ENCODE measurements at regions of chr2 and their contacts with region 1.

Region 1: GRCh38 chr2:207408086-207408794 is 121.5 kb upstream of the CREB1 start:
- DNase-seq: no peak
- ATAC-seq: no peak
- H3K4me3 ChIP-seq: no peak overlapping the region
- H3K4me3 Mint-ChIP-seq: no peak overlapping the region
- H3K27ac ChIP-seq: no peak overlapping the region
- H3K27ac Mint-ChIP-seq: no peak overlapping the region
- H3K4me1 ChIP-seq: no peaks in the 10 kb centered on the region
- H3K4me1 Mint-ChIP-seq: no peaks in the 10 kb centered on the region
- H3K27me3 ChIP-seq: no peaks in the 10 kb centered on the region
- H3K27me3 Mint-ChIP-seq: no peaks in the 10 kb centered on the region

Region 2: GRCh38 chr2:206713746-206714145 is 694.5 kb before region 1 on chr2:
- CTCF ChIA-PET with region 1: no interaction called
- POLR2A ChIA-PET with region 1: interaction called in 1 of 2 experiments, 10 read pairs
- DNase-seq: no peak
- ATAC-seq: no peak
- H3K4me3 ChIP-seq: no peak overlapping the region
- H3K4me3 Mint-ChIP-seq: no peak overlapping the region
- H3K27ac ChIP-seq: no peak overlapping the region
- H3K27ac Mint-ChIP-seq: no peak overlapping the region
- H3K4me1 ChIP-seq: no peaks in the 10 kb centered on the region
- H3K4me1 Mint-ChIP-seq: no peaks in the 10 kb centered on the region
- H3K27me3 ChIP-seq: no peaks in the 10 kb centered on the region
- H3K27me3 Mint-ChIP-seq: peaks cover 10 to 17% of the 10 kb centered on the region in 2 donors

Region 3: DNA sequence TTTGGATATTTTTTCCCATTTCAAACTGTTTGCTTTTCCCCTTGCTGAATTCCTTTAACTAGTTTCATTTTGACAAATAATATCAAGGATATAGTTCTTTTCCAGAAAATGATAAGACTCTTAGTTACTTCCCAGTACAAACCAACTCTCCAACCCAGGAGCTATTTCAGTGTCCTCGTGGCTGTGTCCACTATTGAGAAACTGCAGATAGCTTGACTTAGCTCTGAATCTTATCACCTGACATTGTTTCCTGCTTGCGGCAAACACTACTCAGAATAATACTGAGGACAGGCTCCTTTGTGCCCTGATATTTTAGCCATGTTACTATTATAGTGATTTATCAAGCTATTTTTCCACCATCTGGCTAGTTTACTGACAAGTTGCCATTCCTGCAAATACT is 317.1 kb before region 1 on chr2:
- CTCF ChIA-PET with region 1: no interaction called
- POLR2A ChIA-PET with region 1: interaction called in 1 of 2 experiments, 10 read pairs
- DNase-seq: no peak
- ATAC-seq: no peak
- H3K4me3 ChIP-seq: no peak overlapping the region
- H3K4me3 Mint-ChIP-seq: no peak overlapping the region
- H3K27ac ChIP-seq: no peak overlapping the region
- H3K27ac Mint-ChIP-seq: no peak overlapping the region
- H3K4me1 ChIP-seq: peaks cover 8 to 11% of the 10 kb centered on the region in 2 experiments
- H3K4me1 Mint-ChIP-seq: peaks cover 49 to 64% (median 57%) of the 10 kb centered on the region in 3 donors
- H3K27me3 ChIP-seq: no peaks in the 10 kb centered on the region
- H3K27me3 Mint-ChIP-seq: no peaks in the 10 kb centered on the region